ENCODE measurements at regions of chr7 and their contacts with region 1.

Region 1: DNA sequence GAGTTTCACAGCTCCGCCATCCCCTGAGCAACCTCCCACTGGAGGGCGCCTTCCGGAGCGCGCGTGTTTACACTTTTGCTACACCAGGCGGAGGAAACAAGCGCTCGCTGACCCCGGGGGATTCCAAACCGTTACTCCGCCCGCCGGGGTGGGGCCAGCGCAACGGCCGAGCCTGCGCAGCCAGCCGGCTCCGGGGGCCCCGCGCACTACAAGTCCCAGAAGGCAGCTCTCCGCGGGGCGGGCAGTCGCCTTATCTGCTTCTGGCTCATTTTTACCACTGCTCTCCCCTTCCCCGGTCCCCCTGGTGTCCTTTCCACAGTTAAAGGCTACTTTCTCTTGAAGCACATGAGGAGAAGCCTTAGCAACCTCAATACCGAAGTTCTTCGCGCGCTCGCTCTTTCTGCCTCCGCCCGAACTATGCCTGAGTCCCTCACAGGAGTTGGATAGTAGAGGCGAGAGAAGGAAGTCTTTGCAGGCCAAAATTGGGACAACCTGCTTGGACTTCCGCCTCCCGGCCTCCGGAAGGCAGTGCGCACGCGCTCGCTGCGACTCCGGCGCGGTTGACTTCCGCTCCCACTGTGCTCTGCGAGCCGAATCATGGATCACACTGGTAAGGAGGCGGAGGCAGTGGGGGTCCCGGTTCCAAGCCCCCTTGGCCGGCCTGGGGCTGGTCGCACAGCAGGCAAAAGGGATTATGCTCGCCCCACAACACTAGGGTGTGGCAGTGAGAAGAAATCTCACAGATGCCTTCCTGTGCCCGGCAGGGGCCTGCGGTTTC is at the start of gene CBLL1:
- DNase-seq: peak; percentile 95 to 98 (median 97)
- ATAC-seq: peak; percentile 95
- H3K4me3 ChIP-seq: peak within 1 kb of the TSS; percentile 90
- H3K4me3 Mint-ChIP-seq: peak within 1 kb of the TSS; percentile 93 to 100 (median 98)
- H3K27ac ChIP-seq: peak within 1 kb of the TSS; percentile 99
- H3K27ac Mint-ChIP-seq: peak within 1 kb of the TSS; percentile 99 to 100 (median 100)
- H3K4me1 ChIP-seq: peaks cover 35 to 36% of the 10 kb centered on the region in 2 donors
- H3K4me1 Mint-ChIP-seq: peaks cover 28 to 58% (median 54%) of the 10 kb centered on the region in 7 donors
- H3K27me3 ChIP-seq: no peaks in the 10 kb centered on the region
- H3K27me3 Mint-ChIP-seq: peaks cover 0 to 3% (median 0%) of the 10 kb centered on the region in 5 donors
- total RNA-seq, gene CBLL1: 41.5 to 54.4 (median 51.1) TPM

Region 2: DNA sequence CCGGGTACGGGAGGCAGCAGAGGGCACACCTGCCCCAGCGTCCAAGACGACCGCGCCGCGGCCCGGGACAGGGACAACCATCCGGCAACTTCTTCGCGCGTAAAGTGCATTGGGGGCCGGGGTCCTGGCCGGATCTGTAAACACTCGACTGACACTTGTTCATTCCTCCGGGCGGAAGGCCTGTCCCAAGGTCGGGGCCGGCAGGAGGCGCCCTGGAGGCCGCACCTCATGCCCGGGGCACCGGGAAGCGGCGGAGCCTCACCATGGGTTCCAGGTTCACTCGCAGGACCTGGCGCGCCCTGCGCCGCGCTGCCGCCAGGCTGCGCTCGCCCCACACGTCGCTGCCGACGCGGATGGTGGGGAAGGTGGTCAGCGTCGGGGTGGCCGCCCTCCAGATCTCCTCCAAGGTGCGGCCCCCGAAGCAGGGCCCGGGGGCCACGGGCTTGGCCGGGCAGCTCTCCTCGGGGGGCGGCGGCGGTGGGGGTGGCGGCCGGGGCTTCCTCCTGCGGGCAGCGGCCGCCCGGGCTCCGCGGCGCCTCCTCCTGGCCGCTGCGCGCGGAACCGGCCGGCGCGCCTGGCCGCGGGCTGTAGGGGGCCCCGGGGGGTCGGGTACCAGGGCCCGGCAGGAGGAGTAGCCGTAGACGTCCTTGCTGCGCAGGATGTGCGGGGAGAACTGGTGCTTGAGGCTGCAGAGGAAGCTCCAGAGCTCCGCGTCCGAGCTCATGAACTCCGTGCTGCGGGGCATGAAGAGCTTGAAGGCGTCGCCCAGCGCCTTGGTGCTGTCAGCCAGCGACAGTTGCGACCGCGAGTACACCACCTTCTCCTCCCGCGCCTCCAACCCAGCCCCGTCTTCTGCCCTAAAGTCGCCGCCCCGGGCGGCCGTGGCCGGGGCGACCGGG is 1083.5 kb before region 1 on chr7:
- CTCF ChIA-PET with region 1: no interaction called
- POLR2A ChIA-PET with region 1: no interaction called
- intact Hi-C with region 1: loop called in 1 of 2 experiments (anchors 5 kb)
- DNase-seq: peak; percentile 58 to 84 (median 68)
- ATAC-seq: peak; percentile 72
- H3K4me3 ChIP-seq: peak overlapping the region; percentile 73
- H3K4me3 Mint-ChIP-seq: peak overlapping the region; percentile 85 to 97 (median 91)
- H3K27ac ChIP-seq: peak overlapping the region; percentile 68
- H3K27ac Mint-ChIP-seq: peak overlapping the region; percentile 86 to 97 (median 92)
- H3K4me1 ChIP-seq: peaks cover 13 to 16% of the 10 kb centered on the region in 2 donors
- H3K4me1 Mint-ChIP-seq: peaks cover 0 to 41% (median 29%) of the 10 kb centered on the region in 7 donors
- H3K27me3 ChIP-seq: no peaks in the 10 kb centered on the region
- H3K27me3 Mint-ChIP-seq: peaks cover 0 to 3% (median 0%) of the 10 kb centered on the region in 5 donors

Region 3: GRCh38 chr7:107130487-107131225 is 613.1 kb before region 1 on chr7:
- CTCF ChIA-PET with region 1: no interaction called
- POLR2A ChIA-PET with region 1: no interaction called
- intact Hi-C with region 1: loop called in 1 of 2 experiments (anchors 1 kb)
- DNase-seq: no peak
- ATAC-seq: no peak
- H3K4me3 ChIP-seq: no peak overlapping the region
- H3K4me3 Mint-ChIP-seq: no peak overlapping the region
- H3K27ac ChIP-seq: no peak overlapping the region
- H3K27ac Mint-ChIP-seq: no peak overlapping the region
- H3K4me1 ChIP-seq: peaks cover 3 to 12% of the 10 kb centered on the region in 2 donors
- H3K4me1 Mint-ChIP-seq: peaks cover 8 to 23% (median 18%) of the 10 kb centered on the region in 7 donors
- H3K27me3 ChIP-seq: no peaks in the 10 kb centered on the region
- H3K27me3 Mint-ChIP-seq: peaks cover 0 to 10% (median 0%) of the 10 kb centered on the region in 5 donors

Region 4: GRCh38 chr7:107579885-107580715 is 163.7 kb before region 1 on chr7 and contains the start of gene BCAP29:
- CTCF ChIA-PET with region 1: no interaction called
- POLR2A ChIA-PET with region 1: no interaction called
- intact Hi-C with region 1: loop called (anchors 1 kb)
- DNase-seq: peak; percentile 50 to 83 (median 65)
- ATAC-seq: peak; percentile 98
- H3K4me3 ChIP-seq: peak within 1 kb of the TSS; percentile 97
- H3K4me3 Mint-ChIP-seq: peak within 1 kb of the TSS; percentile 83 to 94 (median 90)
- H3K27ac ChIP-seq: peak within 1 kb of the TSS; percentile 72
- H3K27ac Mint-ChIP-seq: peak within 1 kb of the TSS; percentile 43 to 93 (median 87)
- H3K4me1 ChIP-seq: peaks cover 4 to 8% of the 10 kb centered on the region in 2 donors
- H3K4me1 Mint-ChIP-seq: peaks cover 6 to 34% (median 25%) of the 10 kb centered on the region in 7 donors
- H3K27me3 ChIP-seq: no peaks in the 10 kb centered on the region
- H3K27me3 Mint-ChIP-seq: no peaks in the 10 kb centered on the region
- total RNA-seq, gene BCAP29: 10.5 to 38.7 (median 14.4) TPM

Region 5: DNA sequence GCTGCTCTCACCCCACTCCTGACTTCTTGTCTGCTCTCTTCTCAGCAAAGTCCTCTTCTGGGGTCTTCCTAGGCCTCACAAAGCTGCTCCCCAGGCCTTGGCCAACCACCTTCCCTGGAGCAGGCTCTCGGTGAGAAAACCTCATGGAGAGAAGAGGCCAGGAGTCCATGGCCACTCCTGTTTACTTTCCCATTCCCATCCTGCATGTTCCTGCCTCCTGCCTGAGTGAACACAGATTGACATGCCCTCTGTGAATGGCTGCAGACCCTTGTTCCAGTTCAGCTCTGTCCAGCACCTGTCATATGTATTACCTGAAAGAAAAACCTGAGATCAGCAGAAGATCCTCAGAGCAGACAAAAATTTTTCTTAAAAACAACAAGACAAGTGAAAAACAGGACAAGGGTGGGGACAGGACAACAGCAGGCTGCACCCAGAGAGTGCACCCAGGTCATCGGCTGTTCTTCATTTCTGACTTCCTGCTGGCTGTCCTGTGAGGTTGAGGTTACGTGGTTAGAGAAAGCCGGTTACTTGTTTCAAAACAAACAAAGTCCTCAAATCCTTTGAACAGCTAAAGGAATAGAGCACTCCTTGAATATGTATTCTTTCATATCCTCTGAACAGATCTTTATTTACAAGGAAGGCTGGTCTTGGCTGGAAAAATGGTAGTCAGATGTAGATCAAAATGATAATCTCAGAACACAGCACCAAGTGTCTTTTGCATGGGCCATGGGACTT is 113.2 kb after region 1 on chr7:
- CTCF ChIA-PET with region 1: no interaction called
- POLR2A ChIA-PET with region 1: interaction called, 13 read pairs
- intact Hi-C with region 1: no loop called
- DNase-seq: peak in 5 of 9 donors; percentile 24 to 41 (median 33)
- ATAC-seq: peak; percentile 68
- H3K4me3 ChIP-seq: peak overlapping the region; percentile 13
- H3K4me3 Mint-ChIP-seq: peak overlapping the region; percentile 25 to 74 (median 56)
- H3K27ac ChIP-seq: peak overlapping the region; percentile 19
- H3K27ac Mint-ChIP-seq: peak overlapping the region; percentile 71 to 91 (median 84)
- H3K4me1 ChIP-seq: peaks cover 20 to 33% of the 10 kb centered on the region in 2 donors
- H3K4me1 Mint-ChIP-seq: peaks cover 21 to 48% (median 38%) of the 10 kb centered on the region in 7 donors
- H3K27me3 ChIP-seq: no peaks in the 10 kb centered on the region
- H3K27me3 Mint-ChIP-seq: peaks cover 0 to under 1% (median 0%) of the 10 kb centered on the region in 5 donors

Region 6: DNA sequence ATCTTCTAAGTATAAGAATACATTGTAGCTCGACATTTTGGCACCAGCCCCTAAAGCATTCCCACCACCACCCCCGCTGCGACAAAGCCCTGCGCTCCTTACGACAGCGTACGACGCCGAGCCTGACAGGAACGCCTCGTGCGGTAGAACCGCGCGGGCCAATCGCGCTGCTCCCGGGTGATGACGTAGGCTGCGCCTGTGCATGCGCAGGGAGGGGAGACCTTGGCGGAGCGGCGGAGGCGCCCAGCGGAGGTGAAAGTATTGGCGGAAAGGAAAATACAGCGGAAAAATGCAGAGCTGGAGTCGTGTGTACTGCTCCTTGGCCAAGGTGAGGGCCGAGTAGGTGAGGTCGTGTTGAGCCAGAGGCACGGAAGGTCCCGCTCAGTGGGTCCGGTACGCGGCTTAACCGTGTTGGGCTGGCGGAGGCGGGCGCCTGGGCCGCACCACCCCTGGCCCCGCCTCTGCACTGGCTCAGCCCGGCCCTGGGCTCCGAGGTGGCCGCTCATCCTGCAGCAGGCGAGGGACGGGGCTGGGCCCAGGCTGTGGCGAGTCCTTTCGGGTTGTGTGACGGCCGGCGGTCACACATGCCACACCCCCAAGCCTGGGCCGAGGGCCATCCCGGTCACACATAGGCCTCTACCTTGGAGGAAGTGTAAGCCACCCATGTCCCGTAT is 147.3 kb after region 1 on chr7 and contains the start of gene DLD:
- CTCF ChIA-PET with region 1: interaction called, 7 read pairs
- POLR2A ChIA-PET with region 1: interaction called, 28 read pairs
- intact Hi-C with region 1: loop called (anchors 1 kb)
- DNase-seq: peak; percentile 89 to 94 (median 93)
- ATAC-seq: peak; percentile 98
- H3K4me3 ChIP-seq: peak within 1 kb of the TSS; percentile 93
- H3K4me3 Mint-ChIP-seq: peak within 1 kb of the TSS; percentile 89 to 100 (median 97)
- H3K27ac ChIP-seq: peak within 1 kb of the TSS; percentile 97
- H3K27ac Mint-ChIP-seq: peak within 1 kb of the TSS; percentile 94 to 100 (median 98)
- H3K4me1 ChIP-seq: peaks cover 5 to 35% of the 10 kb centered on the region in 2 donors
- H3K4me1 Mint-ChIP-seq: peaks cover 20 to 55% (median 52%) of the 10 kb centered on the region in 7 donors
- H3K27me3 ChIP-seq: no peaks in the 10 kb centered on the region
- H3K27me3 Mint-ChIP-seq: peaks cover 0 to 3% (median 0%) of the 10 kb centered on the region in 5 donors
- total RNA-seq, gene DLD: 44.5 to 69.3 (median 53.7) TPM

Region 7: GRCh38 chr7:108525985-108526767 is 782.4 kb after region 1 on chr7 and contains the start of gene PNPLA8:
- CTCF ChIA-PET with region 1: no interaction called
- POLR2A ChIA-PET with region 1: no interaction called
- intact Hi-C with region 1: loop called (anchors 1 kb)
- DNase-seq: peak; percentile 100
- ATAC-seq: peak; percentile 94
- H3K4me3 ChIP-seq: peak within 1 kb of the TSS; percentile 94
- H3K4me3 Mint-ChIP-seq: peak within 1 kb of the TSS; percentile 84 to 98 (median 97)
- H3K27ac ChIP-seq: peak within 1 kb of the TSS; percentile 89
- H3K27ac Mint-ChIP-seq: peak within 1 kb of the TSS; percentile 97 to 100 (median 99)
- H3K4me1 ChIP-seq: peaks cover 18% of the 10 kb centered on the region in 2 donors
- H3K4me1 Mint-ChIP-seq: peaks cover 18 to 46% (median 33%) of the 10 kb centered on the region in 7 donors
- H3K27me3 ChIP-seq: no peaks in the 10 kb centered on the region
- H3K27me3 Mint-ChIP-seq: peaks cover 0 to 4% (median 0%) of the 10 kb centered on the region in 5 donors
- total RNA-seq, gene PNPLA8: 18.5 to 89.9 (median 29.8) TPM

Measured in naive thymus-derived CD4-positive, alpha-beta T cell (primary cell).